ENCODE measurements at regions of chr13 and their contacts with region 1.

Region 1: DNA sequence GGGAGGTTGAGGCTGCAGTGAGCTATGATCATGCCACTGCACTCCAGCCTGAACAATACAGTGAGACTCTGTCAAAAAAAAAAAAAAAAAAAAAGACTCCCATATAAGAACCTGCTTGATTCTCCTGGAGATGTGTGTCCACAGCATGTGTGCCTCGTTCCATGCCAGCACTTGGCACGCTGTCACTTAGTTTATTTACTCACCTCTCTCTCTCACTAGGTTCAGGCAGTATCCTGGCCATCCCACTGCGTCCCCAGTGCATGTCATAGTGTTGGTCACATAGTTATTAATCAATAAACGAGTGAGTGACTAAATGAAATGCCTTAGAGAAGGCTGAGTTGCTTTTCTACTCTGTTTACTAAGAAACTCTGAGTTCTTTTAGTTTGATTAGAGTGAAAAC is 79.1 kb upstream of the GPR12 start:
- DNase-seq: no peak
- ATAC-seq: no peak
- H3K4me3 ChIP-seq: no peak overlapping the region
- H3K27ac ChIP-seq: no peak overlapping the region
- H3K4me1 ChIP-seq: no peaks in the 10 kb centered on the region
- H3K27me3 ChIP-seq: peaks cover 0 to 1% of the 10 kb centered on the region in 2 experiments; a peak in 2 of 4 replicates
- CTCF ChIP-seq: no peak
- EP300 ChIP-seq: no peak
- POLR2A ChIP-seq: no peak
- RAD21 ChIP-seq: no peak

Region 2: GRCh38 chr13:26909477-26909876 is 69.8 kb after region 1 on chr13:
- CTCF ChIA-PET with region 1: no interaction called
- POLR2A ChIA-PET with region 1: no interaction called
- RAD21 ChIA-PET with region 1: no interaction called
- SMC1A ChIA-PET with region 1: no interaction called
- in situ Hi-C with region 1: loop called (anchors 10 kb)
- intact Hi-C with region 1: no loop called
- DNase-seq: no peak
- ATAC-seq: no peak
- H3K4me3 ChIP-seq: no peak overlapping the region
- H3K27ac ChIP-seq: no peak overlapping the region
- H3K4me1 ChIP-seq: no peaks in the 10 kb centered on the region
- H3K27me3 ChIP-seq: peaks cover 1 to 2% of the 10 kb centered on the region in 2 experiments
- CTCF ChIP-seq: no peak
- EP300 ChIP-seq: no peak
- POLR2A ChIP-seq: no peak
- RAD21 ChIP-seq: no peak

Measured in GM12878 (cell line).